ENCODE measurements at regions of chr18 and their contacts with region 1.

Region 1: DNA sequence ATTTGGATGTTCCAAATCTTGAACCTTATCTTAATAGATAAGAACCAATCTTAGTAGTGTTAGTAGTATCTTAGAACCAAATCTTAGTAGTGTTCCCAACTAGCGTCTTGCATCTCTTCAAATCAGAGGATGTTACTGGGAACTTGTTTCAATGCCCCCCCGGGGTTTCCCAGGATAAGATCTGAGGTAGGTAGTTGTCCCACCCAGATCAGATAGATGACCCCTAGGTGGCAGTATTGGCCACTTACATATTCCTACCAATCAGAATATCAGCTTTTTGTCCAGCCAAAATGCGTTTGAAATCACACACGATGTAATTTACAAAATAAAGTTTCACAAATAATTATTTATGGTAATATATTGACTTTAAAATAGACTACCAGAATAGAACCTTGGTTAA is 314.8 kb downstream of the MBD2 start:
- DNase-seq: peak; percentile 11
- H3K4me3 Mint-ChIP-seq: no peak overlapping the region
- H3K27ac Mint-ChIP-seq: no peak overlapping the region
- H3K4me1 Mint-ChIP-seq: no peaks in the 10 kb centered on the region
- H3K27me3 Mint-ChIP-seq: peaks cover 11% of the 10 kb centered on the region

Region 2: GRCh38 chr18:54127759-54128378 is 218.2 kb after region 1 on chr18:
- CTCF ChIA-PET with region 1: interaction called, 10 read pairs
- POLR2A ChIA-PET with region 1: no interaction called
- intact Hi-C with region 1: no loop called
- DNase-seq: peak; percentile 47
- H3K4me3 Mint-ChIP-seq: no peak overlapping the region
- H3K27ac Mint-ChIP-seq: no peak overlapping the region
- H3K4me1 Mint-ChIP-seq: peaks cover 15% of the 10 kb centered on the region
- H3K27me3 Mint-ChIP-seq: no peaks in the 10 kb centered on the region

Measured in activated CD4-positive, alpha-beta memory T cell treated with anti-CD3 and anti-CD28 coated beads for 36 hours (primary cell).